MCF 10A (cell line): ENCODE measurements at regions of chr3 and their contacts with region 1.

Region 1: DNA sequence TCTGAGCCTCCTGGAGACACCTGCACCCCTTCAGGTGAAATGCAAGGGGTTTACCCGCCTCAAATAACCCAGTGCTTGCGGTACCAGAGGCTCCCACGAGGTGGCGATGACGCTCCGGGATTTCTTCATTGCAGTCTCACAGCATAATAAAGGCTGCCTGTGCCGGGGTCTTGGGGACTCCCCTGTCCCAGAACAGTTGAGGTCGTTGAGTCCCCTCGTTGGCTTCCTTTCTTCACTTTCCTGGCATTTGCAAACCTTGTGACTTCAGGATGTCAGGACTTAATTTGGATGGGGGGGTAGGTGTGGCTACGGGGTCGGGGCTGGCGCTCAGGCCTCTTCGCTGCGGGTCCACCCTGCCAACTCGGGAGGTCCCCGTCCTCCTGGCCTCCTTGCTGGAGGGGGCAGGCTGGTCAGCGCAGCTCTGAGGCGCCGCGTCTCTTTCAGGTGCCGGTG is 1.3 kb downstream of the GNAT1 start:
- DNase-seq: peak; percentile 68
- H3K4me3 Mint-ChIP-seq: no peak overlapping the region
- H3K27ac Mint-ChIP-seq: no peak overlapping the region
- H3K4me1 Mint-ChIP-seq: no peaks in the 10 kb centered on the region
- H3K27me3 Mint-ChIP-seq: no peaks in the 10 kb centered on the region
- CTCF ChIP-seq: peak; percentile 85

Region 2: DNA sequence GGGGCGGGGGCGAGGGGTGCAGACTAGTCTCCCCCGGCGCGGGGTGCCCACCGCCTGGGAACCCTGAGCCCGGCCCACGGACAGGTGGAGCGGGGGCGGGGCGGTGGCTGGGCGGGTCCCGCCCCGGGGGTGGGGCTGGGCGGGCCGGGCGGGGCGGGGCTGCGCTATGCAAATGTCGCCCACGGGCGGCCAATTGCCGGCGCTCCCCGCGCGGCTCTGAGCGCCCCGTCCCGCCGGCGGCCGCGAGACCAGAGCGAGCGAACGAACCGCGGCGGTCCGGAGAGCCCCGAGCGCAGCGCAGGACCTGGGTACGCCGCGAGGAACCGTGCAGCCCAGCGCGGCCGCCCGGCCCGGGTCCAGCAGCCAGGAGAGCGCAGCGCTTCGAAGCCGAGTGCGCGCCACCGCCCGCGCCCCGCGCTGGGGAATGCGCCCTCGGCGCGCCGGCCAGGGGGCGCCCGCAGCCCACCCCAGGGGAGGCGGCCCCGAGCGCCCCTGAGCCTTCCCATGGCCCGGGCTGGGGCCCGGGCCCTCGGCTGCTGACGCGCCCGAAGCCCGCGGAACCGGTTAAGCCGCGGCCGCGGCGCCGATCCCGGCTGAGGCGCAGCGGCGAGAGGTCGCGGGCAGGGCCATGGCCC is 37.8 kb before region 1 on chr3 and contains the start of gene SEMA3F:
- CTCF ChIA-PET with region 1: interaction called, 6 read pairs
- POLR2A ChIA-PET with region 1: interaction called, 3 read pairs
- intact Hi-C with region 1: loop called (anchors 1 kb)
- DNase-seq: peak; percentile 78
- H3K4me3 Mint-ChIP-seq: peak within 1 kb of the TSS; percentile 84
- H3K27ac Mint-ChIP-seq: peak within 1 kb of the TSS; percentile 61
- H3K4me1 Mint-ChIP-seq: peaks cover 63% of the 10 kb centered on the region
- H3K27me3 Mint-ChIP-seq: no peaks in the 10 kb centered on the region
- CTCF ChIP-seq: peak; percentile 44
- total RNA-seq, gene SEMA3F: 34.6 and 51.5 TPM in 2 replicates

Region 3: DNA sequence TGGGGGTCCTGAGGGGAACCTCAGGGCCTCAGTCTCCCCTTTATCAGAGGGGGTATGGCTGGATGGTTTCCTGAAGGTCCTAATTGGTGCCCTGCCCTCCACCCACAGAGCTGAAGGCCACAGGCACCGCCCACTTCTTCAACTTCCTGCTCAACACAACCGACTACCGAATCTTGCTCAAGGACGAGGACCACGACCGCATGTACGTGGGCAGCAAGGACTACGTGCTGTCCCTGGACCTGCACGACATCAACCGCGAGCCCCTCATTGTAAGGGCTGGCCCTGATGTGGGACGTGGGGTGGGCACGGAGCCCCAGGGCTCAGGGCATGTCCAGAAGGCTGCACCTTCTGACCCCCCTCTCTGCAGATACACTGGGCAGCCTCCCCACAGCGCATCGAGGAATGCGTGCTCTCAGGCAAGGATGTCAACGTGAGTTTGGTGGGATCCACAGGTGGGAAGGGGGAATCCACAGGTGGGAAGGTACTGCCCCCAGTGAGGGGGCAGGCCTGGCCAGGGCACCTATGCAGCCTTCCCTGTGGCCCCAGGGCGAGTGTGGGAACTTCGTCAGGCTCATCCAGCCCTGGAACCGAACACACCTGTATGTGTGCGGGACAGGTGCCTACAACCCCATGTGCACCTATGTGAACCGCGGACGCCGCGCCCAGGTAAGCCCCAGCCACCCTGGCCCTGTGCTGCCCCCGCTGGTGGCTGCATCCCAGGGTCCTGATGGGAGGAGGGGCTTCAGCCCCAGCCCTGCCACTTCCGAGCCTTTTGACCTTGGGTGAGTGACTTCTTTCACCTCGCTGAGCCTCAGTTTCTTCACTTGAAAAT is 18.8 kb before region 1 on chr3:
- CTCF ChIA-PET with region 1: interaction called, 11 read pairs
- POLR2A ChIA-PET with region 1: interaction called, 6 read pairs
- intact Hi-C with region 1: no loop called
- DNase-seq: no peak
- H3K4me3 Mint-ChIP-seq: no peak overlapping the region
- H3K27ac Mint-ChIP-seq: no peak overlapping the region
- H3K4me1 Mint-ChIP-seq: peaks cover 17% of the 10 kb centered on the region
- H3K27me3 Mint-ChIP-seq: no peaks in the 10 kb centered on the region
- CTCF ChIP-seq: no peak

Region 4: DNA sequence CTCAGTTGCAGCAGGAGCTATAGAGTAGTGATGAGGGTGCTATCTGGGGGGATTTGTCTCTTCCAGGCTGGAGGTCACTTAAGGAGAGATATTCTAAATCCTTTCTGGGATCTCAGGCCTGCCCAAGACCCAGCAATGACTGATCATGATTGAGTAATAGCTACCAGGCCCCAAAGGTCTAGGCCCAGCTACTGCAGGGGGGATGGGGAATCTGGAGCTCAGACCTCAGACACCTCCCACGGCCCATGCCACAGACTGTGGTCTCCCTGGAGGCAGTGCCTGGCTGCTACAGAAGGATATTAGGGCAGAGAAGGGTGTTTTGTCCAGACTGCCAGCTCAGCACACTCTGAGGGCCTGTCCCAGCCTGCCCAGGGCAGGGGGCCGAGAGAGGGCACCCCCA is 19.2 kb after region 1 on chr3:
- CTCF ChIA-PET with region 1: interaction called, 209 read pairs
- POLR2A ChIA-PET with region 1: interaction called, 3 read pairs
- intact Hi-C with region 1: no loop called
- DNase-seq: no peak
- H3K4me3 Mint-ChIP-seq: no peak overlapping the region
- H3K27ac Mint-ChIP-seq: no peak overlapping the region
- H3K4me1 Mint-ChIP-seq: no peaks in the 10 kb centered on the region
- H3K27me3 Mint-ChIP-seq: no peaks in the 10 kb centered on the region
- CTCF ChIP-seq: no peak

Region 5: GRCh38 chr3:50272911-50273693 is 80.4 kb after region 1 on chr3:
- CTCF ChIA-PET with region 1: interaction called, 50 read pairs
- POLR2A ChIA-PET with region 1: no interaction called
- intact Hi-C with region 1: loop called (anchors 1 kb)
- DNase-seq: peak; percentile 85
- H3K4me3 Mint-ChIP-seq: peak overlapping the region; percentile 45
- H3K27ac Mint-ChIP-seq: no peak overlapping the region
- H3K4me1 Mint-ChIP-seq: peaks cover 42% of the 10 kb centered on the region
- H3K27me3 Mint-ChIP-seq: no peaks in the 10 kb centered on the region
- CTCF ChIP-seq: peak; percentile 94